ENCODE measurements at regions of chr17 and their contacts with region 1.

Region 1: GRCh38 chr17:37710344-37710886 is 34.4 kb downstream of the HNF1B start:
- DNase-seq: no peak
- ATAC-seq: no peak
- H3K4me3 ChIP-seq: no peak overlapping the region
- H3K27ac ChIP-seq: no peak overlapping the region
- H3K4me1 ChIP-seq: no peaks in the 10 kb centered on the region
- H3K27me3 ChIP-seq: peaks cover 0 to 45% (median 22%) of the 10 kb centered on the region in 7 donors
- CTCF ChIP-seq: no peak

Region 2: DNA sequence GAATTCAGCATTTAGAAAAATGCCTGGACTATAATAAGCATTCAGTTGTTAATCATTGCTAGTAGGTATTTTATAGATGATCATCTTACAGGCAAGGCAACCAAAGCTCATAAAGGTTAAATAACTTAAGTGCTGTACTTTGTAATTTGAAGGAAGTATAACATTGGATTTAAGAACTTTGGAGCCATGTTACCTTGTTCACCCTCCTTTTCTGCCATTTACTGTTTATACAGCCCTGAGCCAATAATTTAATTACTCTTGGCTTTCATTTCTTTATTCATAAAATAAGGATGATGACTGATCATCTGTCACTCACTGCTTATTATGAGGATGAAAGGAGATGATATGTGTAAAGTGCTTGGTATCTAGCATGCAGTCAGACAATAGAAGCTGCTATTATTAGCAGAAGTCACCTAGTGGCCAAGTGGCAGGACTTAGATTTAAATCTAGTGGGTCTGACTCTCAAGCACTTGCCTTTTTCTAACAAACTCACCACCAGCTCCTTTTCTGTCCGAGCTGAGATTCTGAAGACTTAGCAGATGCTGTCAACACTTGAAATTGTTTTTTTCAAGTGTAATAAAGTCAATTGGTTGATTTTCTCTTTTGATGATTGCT is 48.9 kb before region 1 on chr17:
- intact Hi-C with region 1: loop called in 2 of 10 experiments (anchors 5 to 10 kb)
- DNase-seq: no peak
- ATAC-seq: no peak
- H3K4me3 ChIP-seq: no peak overlapping the region
- H3K27ac ChIP-seq: no peak overlapping the region
- H3K4me1 ChIP-seq: no peaks in the 10 kb centered on the region
- H3K27me3 ChIP-seq: no peaks in the 10 kb centered on the region
- CTCF ChIP-seq: no peak

Region 3: GRCh38 chr17:37761059-37761458 is 50.6 kb after region 1 on chr17:
- intact Hi-C with region 1: loop called in 2 of 10 experiments (anchors 5 to 10 kb)
- DNase-seq: no peak
- ATAC-seq: no peak
- H3K4me3 ChIP-seq: no peak overlapping the region
- H3K27ac ChIP-seq: no peak overlapping the region
- H3K4me1 ChIP-seq: peaks cover 0 to 7% (median 0%) of the 10 kb centered on the region in 9 donors
- H3K27me3 ChIP-seq: peaks cover 0 to 90% (median 45%) of the 10 kb centered on the region in 7 donors
- CTCF ChIP-seq: no peak

Region 4: DNA sequence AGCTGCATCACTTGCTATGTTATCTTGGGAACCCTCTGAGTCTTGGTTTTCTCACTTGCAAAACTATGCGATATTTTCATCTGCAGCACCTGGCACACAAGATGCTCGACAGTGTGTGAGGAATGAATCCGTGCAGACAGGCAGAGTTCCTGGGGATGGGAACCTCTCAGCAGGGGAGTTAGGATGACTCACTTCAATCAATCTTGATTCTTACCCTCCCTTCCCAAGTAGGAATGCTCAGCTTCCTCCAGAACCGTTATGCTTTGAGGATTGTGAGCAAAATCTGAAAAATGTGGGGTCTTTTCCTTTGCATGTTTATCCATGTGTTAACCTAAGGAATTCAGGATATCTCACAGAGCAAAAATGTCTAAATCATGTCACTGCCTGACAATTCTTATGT is 103.3 kb after region 1 on chr17:
- intact Hi-C with region 1: no loop called
- DNase-seq: no peak
- ATAC-seq: no peak
- H3K4me3 ChIP-seq: no peak overlapping the region
- H3K27ac ChIP-seq: no peak overlapping the region
- H3K4me1 ChIP-seq: peaks cover 0 to 10% (median 0%) of the 10 kb centered on the region in 9 donors
- H3K27me3 ChIP-seq: peaks cover 0 to 33% (median 16%) of the 10 kb centered on the region in 7 donors
- CTCF ChIP-seq: no peak

Measured in heart right ventricle (tissue), 16 donors.